ENCODE measurements at regions of chr1 and their contacts with region 1.

Region 1: DNA sequence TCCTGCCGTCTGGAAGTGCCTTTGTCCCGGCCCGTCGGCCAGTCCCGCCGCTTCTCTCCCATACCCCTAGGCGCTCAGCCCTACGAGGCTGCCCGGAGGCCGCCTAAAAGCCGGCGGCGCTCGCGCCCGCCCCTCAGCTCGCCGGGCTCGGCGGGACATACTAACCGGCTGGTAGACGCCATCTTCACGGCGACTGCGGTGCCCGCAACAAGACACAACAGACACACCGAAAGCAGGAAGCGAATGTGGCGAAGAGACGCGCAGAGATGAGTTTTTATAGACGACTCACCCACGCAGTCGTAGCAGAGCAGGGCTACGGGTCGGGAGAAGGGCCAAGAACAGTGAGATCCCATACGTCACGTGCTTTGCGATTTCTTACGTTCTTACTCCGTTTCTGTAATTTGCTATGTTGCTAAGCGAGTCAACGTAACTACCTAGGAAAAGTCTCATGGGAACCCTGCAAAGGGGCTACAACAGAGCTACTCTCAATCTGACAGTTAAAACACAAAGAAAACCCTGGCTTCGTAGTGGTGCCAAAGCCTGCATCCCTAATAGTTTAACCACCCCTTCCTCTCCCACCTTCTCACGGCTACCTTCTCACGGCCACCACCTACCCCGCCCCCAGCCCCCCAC is at the start of gene GTF2B:
- DNase-seq: peak; percentile 86 to 90
- H3K4me3 ChIP-seq: peak within 1 kb of the TSS; percentile 93
- H3K27ac ChIP-seq: peak within 1 kb of the TSS; percentile 73
- H3K4me1 ChIP-seq: peaks cover 20% of the 10 kb centered on the region
- H3K27me3 ChIP-seq: no peaks in the 10 kb centered on the region
- CTCF ChIP-seq: no peak
- total RNA-seq, gene GTF2B: 18.3 and 21.9 TPM in 2 replicates

Region 2: GRCh38 chr1:88990426-88990825 is 99.0 kb after region 1 on chr1:
- CTCF ChIA-PET with region 1: no interaction called
- POLR2A ChIA-PET with region 1: no interaction called
- intact Hi-C with region 1: loop called (anchors 1 kb)
- DNase-seq: no peak
- H3K4me3 ChIP-seq: peak overlapping the region; percentile 79; the same call in 1 of the 2 replicates
- H3K27ac ChIP-seq: no peak overlapping the region
- H3K4me1 ChIP-seq: peaks cover 31% of the 10 kb centered on the region
- H3K27me3 ChIP-seq: no peaks in the 10 kb centered on the region
- CTCF ChIP-seq: no peak

Region 3: DNA sequence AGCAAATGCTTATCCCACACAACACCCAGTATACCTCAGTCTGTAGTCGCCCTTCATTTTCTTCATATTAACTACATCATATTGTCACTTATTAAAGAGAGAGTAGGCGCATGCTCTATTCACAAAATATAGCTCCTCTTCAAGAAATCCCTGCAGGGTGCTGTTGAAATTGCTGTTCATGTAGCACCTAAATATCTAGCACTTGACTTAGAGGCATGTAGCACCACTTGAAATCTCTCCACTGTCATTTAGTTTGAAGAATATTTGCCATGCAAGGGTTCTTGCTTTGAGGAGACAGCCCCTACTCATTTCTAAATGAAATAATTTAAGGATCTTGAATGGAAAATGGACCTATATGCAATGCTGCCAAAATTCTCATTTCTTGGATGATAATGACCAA is 612.3 kb after region 1 on chr1:
- CTCF ChIA-PET with region 1: no interaction called
- POLR2A ChIA-PET with region 1: no interaction called
- intact Hi-C with region 1: no loop called
- DNase-seq: no peak
- H3K4me3 ChIP-seq: no peak overlapping the region
- H3K27ac ChIP-seq: no peak overlapping the region
- H3K4me1 ChIP-seq: no peaks in the 10 kb centered on the region
- H3K27me3 ChIP-seq: no peaks in the 10 kb centered on the region
- CTCF ChIP-seq: no peak